ENCODE measurements at regions of chr3 and their contacts with region 1.

Region 1: GRCh38 chr3:52685709-52686691 is at the starts of genes GNL3 and PBRM1:
- DNase-seq: peak; percentile 81 to 91
- H3K4me3 ChIP-seq: peak within 1 kb of the TSS; percentile 75 to 99 (median 94)
- H3K27ac ChIP-seq: peak within 1 kb of the TSS; percentile 92
- H3K4me1 ChIP-seq: peaks cover 0 to 2% (median under 1%) of the 10 kb centered on the region in 4 experiments; a peak in 3 of 7 replicates
- H3K27me3 ChIP-seq: no peaks in the 10 kb centered on the region
- CTCF ChIP-seq: no peak
- EP300 ChIP-seq: no peak
- POLR2A ChIP-seq: peak; percentile 93 to 98
- RAD21 ChIP-seq: no peak
- total RNA-seq, gene GNL3: 174 and 184 TPM in 2 replicates
- total RNA-seq, gene PBRM1: 65.8 and 65.9 TPM in 2 replicates

Region 2: GRCh38 chr3:52705688-52706686 is 20.0 kb after region 1 on chr3 and contains the starts of genes GLT8D1 and SPCS1:
- CTCF ChIA-PET with region 1: no interaction called
- POLR2A ChIA-PET with region 1: interaction called, 347 read pairs
- DNase-seq: peak in 1 of 2 experiments; percentile 90
- H3K4me3 ChIP-seq: peak within 1 kb of the TSS; percentile 70 to 93 (median 82)
- H3K27ac ChIP-seq: peak within 1 kb of the TSS; percentile 70
- H3K4me1 ChIP-seq: peaks cover 0 to 5% (median 2%) of the 10 kb centered on the region in 4 experiments; a peak in 5 of 7 replicates
- H3K27me3 ChIP-seq: no peaks in the 10 kb centered on the region
- CTCF ChIP-seq: no peak
- EP300 ChIP-seq: no peak
- POLR2A ChIP-seq: peak in 1 of 2 experiments; percentile 83; a peak in 2 of 3 replicates
- RAD21 ChIP-seq: no peak
- total RNA-seq, gene GLT8D1: 33.6 and 33.8 TPM in 2 replicates
- total RNA-seq, gene SPCS1: 102 and 104 TPM in 2 replicates

Region 3: GRCh38 chr3:52721002-52721729 is 35.2 kb after region 1 on chr3:
- CTCF ChIA-PET with region 1: no interaction called
- POLR2A ChIA-PET with region 1: interaction called, 106 read pairs
- DNase-seq: no peak
- H3K4me3 ChIP-seq: no peak overlapping the region
- H3K27ac ChIP-seq: no peak overlapping the region
- H3K4me1 ChIP-seq: no peaks in the 10 kb centered on the region
- H3K27me3 ChIP-seq: no peaks in the 10 kb centered on the region
- CTCF ChIP-seq: no peak
- EP300 ChIP-seq: no peak
- POLR2A ChIP-seq: no peak
- RAD21 ChIP-seq: no peak